ENCODE measurements at regions of chr16 and their contacts with region 1.

Region 1: GRCh38 chr16:19886073-19886941 is 1.7 kb upstream of the GPRC5B start:
- DNase-seq: peak; percentile 85
- H3K4me3 ChIP-seq: peak overlapping the region; percentile 19
- H3K27ac ChIP-seq: no peak overlapping the region
- H3K4me1 ChIP-seq: peaks cover 9% of the 10 kb centered on the region
- H3K27me3 ChIP-seq: peaks cover 5% of the 10 kb centered on the region
- CTCF ChIP-seq: peak; percentile 100

Region 2: DNA sequence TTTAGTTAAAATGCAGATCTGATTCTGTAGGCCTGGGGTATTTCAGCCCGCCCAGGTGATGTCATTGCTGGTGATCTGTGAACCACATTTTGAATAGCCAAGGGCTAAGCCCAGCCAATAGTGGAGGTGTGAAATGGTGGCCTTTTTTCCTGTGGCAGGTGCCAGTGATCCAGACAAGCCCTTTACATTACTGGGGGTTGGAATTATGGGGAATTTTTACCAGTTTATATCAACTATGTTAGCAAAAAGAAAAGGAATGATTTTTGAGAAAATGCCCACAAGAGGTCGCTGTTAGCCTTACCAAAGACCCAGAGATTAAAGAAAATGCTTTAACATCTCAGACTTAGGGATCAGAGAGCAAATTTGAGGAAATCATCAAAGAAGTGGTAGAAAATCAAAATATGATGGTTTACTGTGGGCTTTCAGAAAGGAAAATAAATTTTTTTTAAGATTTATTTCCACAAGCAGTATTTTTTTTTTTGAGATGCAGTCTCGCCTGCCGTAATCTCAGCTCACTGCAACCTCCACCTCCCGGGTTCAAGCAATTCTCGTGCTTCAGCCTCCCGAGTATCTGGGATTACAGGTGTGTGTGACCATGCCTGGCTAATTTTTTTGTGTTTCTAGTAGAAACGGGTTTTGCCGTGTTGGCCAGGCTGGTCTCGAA is 326.9 kb before region 1 on chr16:
- intact Hi-C with region 1: loop called (anchors 2 kb)
- DNase-seq: peak; percentile 34
- H3K4me3 ChIP-seq: no peak overlapping the region
- H3K27ac ChIP-seq: no peak overlapping the region
- H3K4me1 ChIP-seq: no peaks in the 10 kb centered on the region
- H3K27me3 ChIP-seq: no peaks in the 10 kb centered on the region
- CTCF ChIP-seq: peak; percentile 45

Region 3: DNA sequence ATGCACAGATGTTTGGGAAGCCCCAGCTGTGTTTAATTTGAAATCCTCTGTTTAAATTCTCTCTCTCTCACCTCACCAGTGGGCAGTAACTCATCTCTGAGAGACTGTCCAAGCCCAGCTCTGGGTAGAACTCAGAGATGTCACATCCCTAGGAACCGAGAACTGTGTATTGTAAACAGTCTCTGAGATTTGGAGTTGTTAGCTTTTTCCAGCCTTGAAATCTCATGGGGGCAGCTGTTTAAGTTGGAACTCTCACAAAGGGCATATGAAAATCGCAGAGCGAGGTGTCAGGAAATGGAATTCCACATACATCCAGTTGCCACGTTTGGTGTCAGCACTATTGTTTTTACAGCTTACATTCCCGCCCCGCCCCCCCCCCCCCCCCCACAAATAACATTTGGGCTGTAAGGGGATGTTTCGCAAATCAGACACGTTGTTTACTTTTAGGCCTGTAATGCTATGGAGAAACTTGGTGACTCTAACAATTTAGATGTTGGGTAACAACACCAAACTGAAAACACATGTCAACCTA is 296.5 kb before region 1 on chr16:
- intact Hi-C with region 1: no loop called
- DNase-seq: no peak
- H3K4me3 ChIP-seq: no peak overlapping the region
- H3K27ac ChIP-seq: peak overlapping the region; percentile 7
- H3K4me1 ChIP-seq: no peaks in the 10 kb centered on the region
- H3K27me3 ChIP-seq: no peaks in the 10 kb centered on the region
- CTCF ChIP-seq: no peak

Region 4: GRCh38 chr16:19601083-19601976 is 285.0 kb before region 1 on chr16:
- intact Hi-C with region 1: loop called (anchors 1 kb)
- DNase-seq: peak; percentile 33
- H3K4me3 ChIP-seq: no peak overlapping the region
- H3K27ac ChIP-seq: no peak overlapping the region
- H3K4me1 ChIP-seq: no peaks in the 10 kb centered on the region
- H3K27me3 ChIP-seq: no peaks in the 10 kb centered on the region
- CTCF ChIP-seq: peak; percentile 47

Region 5: GRCh38 chr16:19680881-19681340 is 205.4 kb before region 1 on chr16:
- intact Hi-C with region 1: loop called (anchors 10 kb)
- DNase-seq: no peak
- H3K4me3 ChIP-seq: no peak overlapping the region
- H3K27ac ChIP-seq: no peak overlapping the region
- H3K4me1 ChIP-seq: no peaks in the 10 kb centered on the region
- H3K27me3 ChIP-seq: no peaks in the 10 kb centered on the region
- CTCF ChIP-seq: no peak

Region 6: DNA sequence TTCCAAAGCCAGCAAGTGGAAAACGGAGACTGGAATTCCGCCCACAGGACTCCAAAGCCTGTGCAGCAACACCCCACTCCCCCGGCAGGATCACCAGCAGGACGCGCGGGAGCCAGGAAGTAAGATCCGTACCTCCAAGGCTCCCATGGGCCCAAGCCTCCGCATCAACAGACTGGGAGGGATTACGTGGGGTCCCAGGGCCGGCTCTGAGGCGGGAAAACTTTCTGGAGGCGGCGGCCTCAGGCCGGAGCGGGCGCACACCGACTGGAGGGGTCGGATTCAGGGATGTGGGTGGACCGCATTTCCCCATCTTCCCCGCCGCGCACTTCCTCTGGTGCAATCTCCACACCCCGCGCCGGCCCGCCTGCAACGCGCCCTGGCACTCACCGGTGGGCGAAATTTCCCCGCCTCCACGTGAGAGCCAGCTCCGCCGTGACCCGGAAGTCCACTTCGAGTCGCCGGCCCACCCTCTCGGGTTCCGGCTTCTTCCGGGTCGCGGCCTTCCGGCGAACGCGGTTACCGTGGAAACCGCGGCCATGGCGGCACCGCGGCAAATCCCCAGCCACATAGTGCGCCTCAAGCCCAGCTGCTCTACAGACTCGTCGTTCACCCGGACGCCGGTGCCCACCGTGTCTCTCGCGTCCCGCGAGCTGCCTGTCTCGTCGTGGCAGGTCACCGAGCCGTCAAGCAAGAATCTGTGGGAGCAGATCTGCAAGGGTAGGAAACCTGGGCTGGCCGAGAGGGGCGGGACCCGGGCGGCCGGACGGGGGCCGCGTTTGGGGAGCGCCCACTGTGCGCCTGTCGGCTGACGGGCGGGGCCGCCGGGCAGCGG is 168.3 kb before region 1 on chr16 and contains the starts of genes IQCK and KNOP1:
- intact Hi-C with region 1: loop called (anchors 5 kb)
- DNase-seq: peak; percentile 91
- H3K4me3 ChIP-seq: peak within 1 kb of the TSS; percentile 98
- H3K27ac ChIP-seq: peak within 1 kb of the TSS; percentile 81
- H3K4me1 ChIP-seq: peaks cover 10% of the 10 kb centered on the region
- H3K27me3 ChIP-seq: no peaks in the 10 kb centered on the region
- CTCF ChIP-seq: no peak
- total RNA-seq, gene IQCK: 13.1 to 13.2 TPM
- total RNA-seq, gene KNOP1: 14.2 to 28.0 TPM

Region 7: GRCh38 chr16:19963301-19963700 is 77.0 kb after region 1 on chr16:
- intact Hi-C with region 1: no loop called
- DNase-seq: no peak
- H3K4me3 ChIP-seq: no peak overlapping the region
- H3K27ac ChIP-seq: no peak overlapping the region
- H3K4me1 ChIP-seq: no peaks in the 10 kb centered on the region
- H3K27me3 ChIP-seq: no peaks in the 10 kb centered on the region
- CTCF ChIP-seq: no peak

Measured in colonic mucosa (tissue), 4 donors.